ENCODE measurements at regions of chr2 and their contacts with region 1.

Region 1: GRCh38 chr2:24409700-24410556 is 49.6 kb upstream of the ITSN2 start:
- DNase-seq: peak in 9 of 14 experiments; percentile 8 to 78 (median 21)
- ATAC-seq: peak; percentile 73
- H3K4me3 ChIP-seq: no peak overlapping the region
- H3K4me3 Mint-ChIP-seq: no peak overlapping the region
- H3K27ac ChIP-seq: no peak overlapping the region
- H3K27ac Mint-ChIP-seq: no peak overlapping the region
- H3K4me1 ChIP-seq: no peaks in the 10 kb centered on the region
- H3K4me1 Mint-ChIP-seq: no peaks in the 10 kb centered on the region
- H3K27me3 ChIP-seq: peaks cover 0 to 7% of the 10 kb centered on the region in 2 experiments
- H3K27me3 Mint-ChIP-seq: peaks cover 22% of the 10 kb centered on the region
- CTCF ChIP-seq: peak; percentile 82

Region 2: GRCh38 chr2:24471662-24472061 is 61.7 kb after region 1 on chr2:
- CTCF ChIA-PET with region 1: no interaction called
- POLR2A ChIA-PET with region 1: no interaction called
- intact Hi-C with region 1: no loop called
- DNase-seq: peak in 3 of 14 experiments; percentile 35 to 49 (median 37)
- ATAC-seq: peak; percentile 84
- H3K4me3 ChIP-seq: no peak overlapping the region
- H3K4me3 Mint-ChIP-seq: no peak overlapping the region
- H3K27ac ChIP-seq: no peak overlapping the region
- H3K27ac Mint-ChIP-seq: no peak overlapping the region
- H3K4me1 ChIP-seq: no peaks in the 10 kb centered on the region
- H3K4me1 Mint-ChIP-seq: no peaks in the 10 kb centered on the region
- H3K27me3 ChIP-seq: no peaks in the 10 kb centered on the region
- H3K27me3 Mint-ChIP-seq: no peaks in the 10 kb centered on the region
- CTCF ChIP-seq: no peak

Region 3: GRCh38 chr2:24827321-24828237 is 417.7 kb after region 1 on chr2:
- CTCF ChIA-PET with region 1: interaction called, 83 read pairs
- POLR2A ChIA-PET with region 1: interaction called, 18 read pairs
- intact Hi-C with region 1: loop called (anchors 1 kb)
- DNase-seq: peak; percentile 57 to 86 (median 62)
- ATAC-seq: peak; percentile 93
- H3K4me3 ChIP-seq: no peak overlapping the region
- H3K4me3 Mint-ChIP-seq: no peak overlapping the region
- H3K27ac ChIP-seq: no peak overlapping the region
- H3K27ac Mint-ChIP-seq: no peak overlapping the region
- H3K4me1 ChIP-seq: peaks cover 15% of the 10 kb centered on the region
- H3K4me1 Mint-ChIP-seq: peaks cover 22% of the 10 kb centered on the region
- H3K27me3 ChIP-seq: no peaks in the 10 kb centered on the region
- H3K27me3 Mint-ChIP-seq: no peaks in the 10 kb centered on the region
- CTCF ChIP-seq: peak; percentile 80

Region 4: DNA sequence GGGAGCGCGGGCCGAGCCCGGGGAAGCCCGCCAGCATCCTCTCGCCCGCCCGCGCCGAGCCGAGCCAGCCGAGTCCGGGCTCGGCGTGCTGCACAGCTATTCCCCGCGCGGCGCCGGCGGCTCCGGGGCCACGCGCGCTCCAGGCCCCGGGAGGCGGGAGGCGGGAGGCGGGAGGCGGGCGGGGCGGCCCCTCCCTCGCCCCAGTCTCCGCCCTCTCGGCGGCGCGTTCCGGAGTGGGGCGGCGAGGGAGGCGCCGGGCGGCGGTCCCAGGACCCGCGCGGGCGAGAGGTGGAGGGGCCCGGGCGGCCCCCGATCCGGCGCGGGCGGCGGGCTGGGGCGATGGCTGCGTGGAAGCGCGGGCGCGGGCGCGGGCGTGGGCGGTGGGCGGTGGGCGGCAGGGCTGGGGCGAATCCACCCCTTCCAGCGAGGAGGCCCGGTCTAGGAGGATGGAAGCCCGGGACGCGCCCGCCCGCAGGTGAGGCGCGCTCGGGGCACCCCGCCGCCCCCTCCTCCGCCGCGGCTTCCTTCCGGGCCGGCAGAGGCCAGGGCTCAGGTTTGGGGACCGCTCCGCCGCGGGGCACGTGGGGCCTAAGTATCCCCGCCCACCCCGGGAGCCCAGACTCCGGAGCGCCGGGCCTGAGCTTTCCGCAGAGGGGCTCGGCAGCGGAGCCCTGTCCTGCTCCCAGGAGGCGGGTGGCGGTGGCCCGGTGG is 510.3 kb after region 1 on chr2 and contains the start of gene ADCY3:
- CTCF ChIA-PET with region 1: no interaction called
- POLR2A ChIA-PET with region 1: no interaction called
- intact Hi-C with region 1: loop called in 1 of 2 experiments (anchors 5 kb)
- DNase-seq: peak; percentile 26 to 85 (median 52)
- ATAC-seq: peak; percentile 62
- H3K4me3 ChIP-seq: peak within 1 kb of the TSS; percentile 60
- H3K4me3 Mint-ChIP-seq: peak within 1 kb of the TSS; percentile 97
- H3K27ac ChIP-seq: peak within 1 kb of the TSS in 1 of 2 donors; percentile 40
- H3K27ac Mint-ChIP-seq: peak within 1 kb of the TSS; percentile 69
- H3K4me1 ChIP-seq: peaks cover 37% of the 10 kb centered on the region
- H3K4me1 Mint-ChIP-seq: peaks cover 34% of the 10 kb centered on the region
- H3K27me3 ChIP-seq: no peaks in the 10 kb centered on the region
- H3K27me3 Mint-ChIP-seq: no peaks in the 10 kb centered on the region
- CTCF ChIP-seq: no peak
- total RNA-seq, gene ADCY3: 28.1 to 31.4 TPM

Region 5: GRCh38 chr2:24930768-24931167 is 520.8 kb after region 1 on chr2:
- CTCF ChIA-PET with region 1: no interaction called
- POLR2A ChIA-PET with region 1: no interaction called
- intact Hi-C with region 1: loop called in 1 of 2 experiments (anchors 5 kb)
- DNase-seq: no peak
- ATAC-seq: no peak
- H3K4me3 ChIP-seq: no peak overlapping the region
- H3K4me3 Mint-ChIP-seq: no peak overlapping the region
- H3K27ac ChIP-seq: no peak overlapping the region
- H3K27ac Mint-ChIP-seq: no peak overlapping the region
- H3K4me1 ChIP-seq: peaks cover 19% of the 10 kb centered on the region
- H3K4me1 Mint-ChIP-seq: no peaks in the 10 kb centered on the region
- H3K27me3 ChIP-seq: no peaks in the 10 kb centered on the region
- H3K27me3 Mint-ChIP-seq: no peaks in the 10 kb centered on the region
- CTCF ChIP-seq: no peak

Region 6: DNA sequence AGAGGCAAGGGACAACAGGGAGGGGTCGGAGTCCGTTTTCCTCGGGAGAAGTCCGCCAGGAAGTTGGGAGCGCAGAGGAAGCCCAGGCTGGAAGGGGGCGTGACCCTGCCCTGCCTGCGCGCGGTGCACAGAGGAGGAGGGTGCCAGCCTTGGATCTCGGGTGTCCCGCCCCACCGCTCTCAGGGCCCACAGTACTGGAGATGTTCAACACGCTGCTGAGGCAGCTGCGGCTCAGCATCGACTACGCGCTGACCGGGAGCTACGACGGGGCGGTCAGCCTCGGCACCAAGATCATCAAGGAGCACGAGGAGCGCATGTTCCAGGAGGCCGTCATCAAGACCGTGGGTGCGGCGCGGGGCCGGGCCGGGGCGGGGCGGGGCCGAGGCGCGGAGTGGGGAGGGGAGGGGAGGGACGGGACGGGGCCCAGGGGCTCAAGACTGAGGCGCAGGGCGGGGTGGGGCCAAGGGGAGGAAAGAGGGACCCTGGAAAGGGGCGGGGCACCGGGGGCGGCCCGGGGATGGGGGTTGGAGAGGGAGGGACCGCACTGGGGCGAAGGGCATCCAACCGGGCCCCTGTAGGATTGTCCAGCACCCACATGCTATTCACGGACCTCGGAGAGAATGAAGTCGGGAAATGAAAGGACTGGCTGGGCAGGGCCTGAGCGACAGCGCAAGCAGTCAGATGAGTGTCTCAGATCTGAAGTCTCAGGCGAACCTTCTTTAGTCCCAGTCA is 721.8 kb after region 1 on chr2:
- CTCF ChIA-PET with region 1: interaction called, 13 read pairs
- POLR2A ChIA-PET with region 1: no interaction called
- intact Hi-C with region 1: loop called in 1 of 2 experiments (anchors 2 kb)
- DNase-seq: peak in 5 of 14 experiments; percentile 3 to 30 (median 11)
- ATAC-seq: peak; percentile 62
- H3K4me3 ChIP-seq: peak overlapping the region; percentile 25
- H3K4me3 Mint-ChIP-seq: peak overlapping the region; percentile 76
- H3K27ac ChIP-seq: no peak overlapping the region
- H3K27ac Mint-ChIP-seq: no peak overlapping the region
- H3K4me1 ChIP-seq: peaks cover 15% of the 10 kb centered on the region
- H3K4me1 Mint-ChIP-seq: peaks cover 14% of the 10 kb centered on the region
- H3K27me3 ChIP-seq: peaks cover 38 to 58% of the 10 kb centered on the region in 2 experiments
- H3K27me3 Mint-ChIP-seq: peaks cover 63% of the 10 kb centered on the region
- CTCF ChIP-seq: no peak

Region 7: GRCh38 chr2:25201265-25201664 is 791.3 kb after region 1 on chr2:
- CTCF ChIA-PET with region 1: interaction called, 4 read pairs
- POLR2A ChIA-PET with region 1: no interaction called
- intact Hi-C with region 1: loop called (anchors 2 to 5 kb)
- DNase-seq: no peak
- ATAC-seq: no peak
- H3K4me3 ChIP-seq: no peak overlapping the region
- H3K4me3 Mint-ChIP-seq: no peak overlapping the region
- H3K27ac ChIP-seq: no peak overlapping the region
- H3K27ac Mint-ChIP-seq: no peak overlapping the region
- H3K4me1 ChIP-seq: peaks cover 15% of the 10 kb centered on the region
- H3K4me1 Mint-ChIP-seq: peaks cover 14% of the 10 kb centered on the region
- H3K27me3 ChIP-seq: no peaks in the 10 kb centered on the region
- H3K27me3 Mint-ChIP-seq: no peaks in the 10 kb centered on the region
- CTCF ChIP-seq: no peak